HepG2 (cell line): ENCODE measurements at regions of chr10 and their contacts with region 1.

Region 1: DNA sequence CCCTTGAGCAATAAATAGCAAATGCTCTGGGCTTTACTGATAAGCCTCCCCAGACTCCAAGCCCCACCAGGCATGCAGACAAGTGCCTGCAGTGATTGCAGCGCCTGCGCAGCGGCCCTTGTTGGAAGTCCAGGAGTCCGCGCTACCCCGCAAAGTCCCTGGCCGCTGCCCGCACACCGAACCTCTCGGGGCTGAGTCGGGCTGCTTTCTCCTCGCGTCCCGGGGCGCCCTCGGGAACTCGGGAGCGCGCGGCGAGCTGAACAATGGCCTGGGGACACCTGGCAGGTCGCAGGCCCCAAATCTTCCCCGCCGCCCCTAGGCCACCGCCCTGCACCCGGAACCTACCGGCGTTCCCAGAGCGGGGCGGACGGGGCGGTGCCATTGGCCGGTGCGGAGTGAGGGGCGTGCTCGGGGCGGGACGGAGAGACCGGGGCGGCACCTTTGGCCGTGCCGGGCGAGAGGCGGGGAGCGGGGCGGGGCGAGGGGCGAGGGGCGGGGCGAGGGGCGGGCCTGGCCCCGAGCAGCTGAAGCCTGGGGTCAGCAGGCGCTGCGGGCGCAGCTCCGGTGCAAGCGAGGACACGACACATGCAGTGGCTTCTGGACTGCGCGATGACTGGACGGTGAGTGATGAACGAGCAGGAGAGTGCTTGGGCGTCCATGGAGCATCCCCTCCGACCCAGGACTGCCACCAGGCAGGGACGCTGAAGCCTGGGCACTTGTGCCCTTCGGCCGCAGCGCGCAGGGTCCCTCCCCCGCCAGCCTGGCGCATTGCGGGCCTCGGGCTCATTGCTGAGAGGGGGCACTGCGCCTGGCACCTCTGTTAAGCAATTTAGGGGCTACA is at the start of gene RASSF4:
- DNase-seq: peak; percentile 81
- ATAC-seq: peak; percentile 89
- H3K4me3 ChIP-seq: peak within 1 kb of the TSS; percentile 82 to 85 (median 84)
- H3K27ac ChIP-seq: peak within 1 kb of the TSS; percentile 90
- H3K4me1 ChIP-seq: peaks cover 65% of the 10 kb centered on the region
- H3K27me3 ChIP-seq: no peaks in the 10 kb centered on the region; a peak in 1 of 5 replicates
- CTCF ChIP-seq: no peak
- EP300 ChIP-seq: peak in 1 of 2 experiments; percentile 7; a peak in 1 of 4 replicates
- POLR2A ChIP-seq: peak; percentile 75 to 94
- RAD21 ChIP-seq: peak; percentile 55
- total RNA-seq, gene RASSF4: 49.9 and 51.7 TPM in 2 replicates

Region 2: GRCh38 chr10:43407576-43408330 is 1551.7 kb before region 1 on chr10:
- CTCF ChIA-PET with region 1: no interaction called
- POLR2A ChIA-PET with region 1: no interaction called
- in situ Hi-C with region 1: loop called (anchors 25 kb)
- intact Hi-C with region 1: no loop called
- DNase-seq: peak; percentile 89
- ATAC-seq: peak; percentile 53
- H3K4me3 ChIP-seq: peak overlapping the region; percentile 86 to 95 (median 87)
- H3K27ac ChIP-seq: peak overlapping the region; percentile 100
- H3K4me1 ChIP-seq: peaks cover 66% of the 10 kb centered on the region
- H3K27me3 ChIP-seq: no peaks in the 10 kb centered on the region; a peak in 1 of 5 replicates
- CTCF ChIP-seq: peak; percentile 59
- EP300 ChIP-seq: no peak; a peak in 1 of 4 replicates
- POLR2A ChIP-seq: peak; percentile 78 to 94
- RAD21 ChIP-seq: peak; percentile 34; the same call in 1 of the 2 replicates

Region 3: DNA sequence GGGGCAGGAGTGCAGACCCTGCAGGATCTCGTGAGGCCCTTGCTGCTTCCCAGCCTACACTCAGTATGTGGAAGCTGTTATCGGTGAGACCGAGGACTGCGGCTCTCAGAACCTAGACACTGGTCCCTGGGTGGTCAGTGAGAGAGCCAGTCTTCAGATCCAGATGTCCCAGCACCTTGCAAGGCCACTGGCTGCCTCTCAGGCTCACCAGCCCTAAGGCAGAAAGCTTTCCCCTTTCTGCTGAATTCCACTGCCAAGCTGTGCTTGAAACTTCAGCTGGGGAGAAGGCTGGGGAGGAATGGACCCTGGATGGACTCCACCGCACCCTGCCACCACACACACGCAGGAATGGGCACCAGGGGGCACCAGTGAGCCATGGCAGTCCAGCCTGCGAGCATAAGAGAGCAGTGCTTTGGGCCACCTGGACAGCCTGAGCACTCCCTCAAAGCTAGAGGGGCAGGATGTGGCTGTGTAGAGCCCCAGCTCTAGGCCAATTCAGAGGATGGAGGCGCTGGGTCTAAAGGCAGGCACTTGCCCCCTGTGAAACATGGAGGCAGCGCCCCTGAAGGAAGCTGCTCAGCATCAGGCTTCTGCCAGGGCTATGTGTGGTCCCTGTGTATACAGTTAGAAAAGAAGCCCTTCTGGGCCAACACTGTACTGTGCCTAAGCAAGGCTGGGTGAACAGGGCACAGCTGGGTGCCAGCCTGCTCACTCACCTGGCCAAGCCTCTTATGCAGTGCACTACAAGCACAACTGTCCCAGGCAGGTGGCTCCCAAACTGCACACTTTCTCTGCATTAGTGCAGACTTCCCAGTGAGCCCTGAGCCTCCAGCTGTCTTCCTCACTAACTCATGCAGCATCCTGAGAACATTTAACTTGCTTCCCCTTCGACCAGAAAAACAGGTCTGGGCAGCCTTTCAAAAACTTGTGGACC is 26.7 kb before region 1 on chr10:
- CTCF ChIA-PET with region 1: interaction called, 5 read pairs
- POLR2A ChIA-PET with region 1: interaction called, 151 read pairs
- in situ Hi-C with region 1: no loop called
- intact Hi-C with region 1: loop called (anchors 1 kb)
- DNase-seq: peak; percentile 76
- ATAC-seq: peak; percentile 92
- H3K4me3 ChIP-seq: peak overlapping the region in 1 of 3 experiments; percentile 45; a peak in 2 of 6 replicates
- H3K27ac ChIP-seq: no peak overlapping the region
- H3K4me1 ChIP-seq: peaks cover 71% of the 10 kb centered on the region
- H3K27me3 ChIP-seq: no peaks in the 10 kb centered on the region
- CTCF ChIP-seq: peak; percentile 100
- EP300 ChIP-seq: no peak
- POLR2A ChIP-seq: no peak
- RAD21 ChIP-seq: peak; percentile 99

Region 4: DNA sequence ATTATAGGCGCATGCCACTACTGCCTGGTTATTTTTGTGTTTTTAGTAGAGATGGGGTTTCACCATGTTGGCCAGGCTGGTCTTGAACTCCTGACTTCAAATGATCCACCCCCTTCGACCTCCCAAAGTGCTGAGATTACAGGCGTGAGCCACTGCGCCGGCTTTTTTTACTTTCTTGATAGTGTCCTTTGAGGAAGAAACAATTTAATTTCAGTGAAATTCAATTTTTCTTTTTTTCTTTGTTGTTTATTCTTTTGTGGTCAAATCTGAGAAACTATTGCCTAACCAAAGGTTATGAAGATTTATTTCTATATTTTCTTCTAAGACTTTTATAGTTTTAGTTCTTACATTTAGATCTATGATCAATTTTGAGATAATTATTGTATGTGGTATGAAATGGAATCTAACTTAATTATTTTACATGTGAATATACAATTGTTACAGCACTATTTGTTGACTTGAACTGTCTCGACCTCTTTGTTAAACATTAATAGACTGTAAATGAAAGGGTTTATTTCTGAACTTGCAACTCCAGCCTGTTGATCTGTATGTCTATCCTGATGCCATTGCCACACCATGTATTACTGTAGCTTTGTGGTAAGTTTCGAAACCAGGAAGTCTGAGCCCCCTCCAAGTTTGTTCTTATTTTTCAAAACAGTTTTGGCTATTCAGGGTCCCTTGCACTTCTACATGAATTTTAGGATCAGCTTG is 19.6 kb before region 1 on chr10:
- CTCF ChIA-PET with region 1: interaction called, 3 read pairs
- POLR2A ChIA-PET with region 1: interaction called, 151 read pairs
- in situ Hi-C with region 1: no loop called
- intact Hi-C with region 1: loop called (anchors 1 kb)
- DNase-seq: peak; percentile 93
- ATAC-seq: peak; percentile 79
- H3K4me3 ChIP-seq: no peak overlapping the region; a peak in 1 of 6 replicates
- H3K27ac ChIP-seq: peak overlapping the region; percentile 61
- H3K4me1 ChIP-seq: peaks cover 59% of the 10 kb centered on the region
- H3K27me3 ChIP-seq: no peaks in the 10 kb centered on the region
- CTCF ChIP-seq: no peak
- EP300 ChIP-seq: peak in 1 of 2 experiments; percentile 91; a peak in 2 of 4 replicates
- POLR2A ChIP-seq: no peak
- RAD21 ChIP-seq: no peak

Region 5: DNA sequence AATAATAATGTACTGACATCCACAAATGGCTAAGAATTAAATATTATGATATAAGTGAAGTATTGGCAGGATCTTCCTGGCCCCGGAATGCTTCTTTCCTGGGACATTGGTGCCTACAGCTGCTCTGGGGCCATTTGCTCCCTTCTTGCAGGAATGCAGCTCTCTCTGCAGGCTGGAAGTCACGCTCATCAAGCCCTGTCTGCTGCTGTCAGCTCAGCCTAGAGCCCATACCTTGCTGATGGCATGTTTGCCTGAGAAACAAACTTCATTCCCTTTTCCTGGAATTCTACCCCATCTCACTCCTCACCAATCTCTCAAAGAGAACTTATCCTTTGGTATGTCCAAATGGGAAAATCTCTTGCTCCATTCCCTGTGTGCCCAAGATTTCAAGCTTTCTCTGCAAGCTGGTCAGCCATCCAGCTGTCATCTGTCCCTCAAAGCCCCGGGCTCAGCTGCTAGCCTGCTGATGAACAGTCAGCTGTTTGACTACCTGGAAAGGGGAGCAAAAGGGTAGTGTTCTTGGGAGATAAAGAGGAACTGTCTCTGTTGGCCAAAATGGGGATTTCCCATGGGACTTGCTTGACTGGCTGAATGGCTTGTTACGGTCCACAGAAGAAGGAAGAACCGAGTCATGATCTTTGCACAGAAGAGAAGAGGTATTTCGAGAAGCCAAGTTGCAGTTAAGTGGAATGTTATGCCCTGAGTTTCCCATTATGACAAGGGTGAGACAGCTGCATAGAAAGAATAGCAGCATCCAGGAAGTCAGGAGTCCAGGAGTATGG is 11.9 kb before region 1 on chr10:
- CTCF ChIA-PET with region 1: no interaction called
- POLR2A ChIA-PET with region 1: interaction called, 84 read pairs
- in situ Hi-C with region 1: no loop called
- intact Hi-C with region 1: loop called (anchors 2 kb)
- DNase-seq: no peak
- ATAC-seq: no peak
- H3K4me3 ChIP-seq: no peak overlapping the region
- H3K27ac ChIP-seq: no peak overlapping the region
- H3K4me1 ChIP-seq: peaks cover 75% of the 10 kb centered on the region
- H3K27me3 ChIP-seq: no peaks in the 10 kb centered on the region
- CTCF ChIP-seq: no peak
- EP300 ChIP-seq: no peak
- POLR2A ChIP-seq: no peak
- RAD21 ChIP-seq: no peak

Region 6: GRCh38 chr10:45000752-45001380 is 41.4 kb after region 1 on chr10 and contains the start of gene ZNF22:
- CTCF ChIA-PET with region 1: no interaction called
- POLR2A ChIA-PET with region 1: interaction called, 43 read pairs
- in situ Hi-C with region 1: no loop called
- intact Hi-C with region 1: no loop called
- DNase-seq: no peak
- ATAC-seq: no peak
- H3K4me3 ChIP-seq: no peak within 1 kb of the TSS
- H3K27ac ChIP-seq: peak within 1 kb of the TSS; percentile 31
- H3K4me1 ChIP-seq: peaks cover 95% of the 10 kb centered on the region
- H3K27me3 ChIP-seq: no peaks in the 10 kb centered on the region
- CTCF ChIP-seq: no peak
- EP300 ChIP-seq: no peak
- POLR2A ChIP-seq: no peak
- RAD21 ChIP-seq: no peak
- total RNA-seq, gene ZNF22: 0.40 and 0.58 TPM in 2 replicates